Common myeloid progenitor, CD34-positive (primary cell): ENCODE measurements at regions of chr16 and their contacts with region 1.

Region 1: DNA sequence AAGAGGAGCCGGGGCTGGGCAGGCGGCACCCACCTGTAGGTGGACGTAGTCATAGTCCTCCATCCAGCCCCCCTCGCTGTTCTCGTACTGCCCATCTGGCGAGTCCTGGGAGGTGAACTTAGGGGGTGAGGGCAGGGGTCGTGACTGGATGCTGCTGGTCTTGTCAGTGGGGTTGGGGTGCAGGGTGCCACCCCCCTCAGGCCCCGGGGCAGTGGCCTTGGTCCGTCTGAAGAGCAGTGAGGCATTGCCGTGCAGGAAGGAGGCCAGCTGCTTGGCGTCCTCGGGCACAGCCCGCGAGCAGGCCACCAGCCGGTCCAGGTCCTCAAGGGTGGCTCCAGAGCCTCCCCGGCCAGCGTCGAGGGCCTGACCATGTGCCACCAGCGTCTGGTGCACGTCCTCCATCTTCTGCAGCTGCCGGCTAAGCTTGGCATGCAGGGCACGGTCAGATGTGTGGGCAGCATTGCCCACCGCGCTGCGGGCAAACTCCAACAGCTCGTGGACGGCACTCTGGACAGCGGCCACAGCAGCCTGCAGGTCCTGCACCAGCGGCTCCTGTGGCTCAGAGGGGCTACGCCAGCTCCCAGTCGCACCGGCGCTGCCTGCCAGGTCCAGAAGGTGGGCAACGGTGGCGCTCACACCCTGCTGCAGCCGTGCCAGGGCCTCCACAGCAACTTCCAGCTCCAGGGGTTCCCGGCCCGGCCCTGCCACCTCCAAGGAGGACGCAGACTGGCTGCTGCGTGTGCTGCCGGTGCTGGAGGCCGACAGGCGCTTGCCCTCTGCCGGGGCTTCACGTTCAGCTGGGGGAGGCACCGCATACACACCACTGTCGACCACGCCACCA is 16.3 kb downstream of the CTRB1 start:
- DNase-seq: no peak
- H3K4me3 ChIP-seq: no peak overlapping the region
- H3K27ac ChIP-seq: no peak overlapping the region
- H3K4me1 ChIP-seq: no peaks in the 10 kb centered on the region
- H3K27me3 ChIP-seq: peaks cover 0 to 88% (median 19%) of the 10 kb centered on the region in 5 experiments

Region 2: DNA sequence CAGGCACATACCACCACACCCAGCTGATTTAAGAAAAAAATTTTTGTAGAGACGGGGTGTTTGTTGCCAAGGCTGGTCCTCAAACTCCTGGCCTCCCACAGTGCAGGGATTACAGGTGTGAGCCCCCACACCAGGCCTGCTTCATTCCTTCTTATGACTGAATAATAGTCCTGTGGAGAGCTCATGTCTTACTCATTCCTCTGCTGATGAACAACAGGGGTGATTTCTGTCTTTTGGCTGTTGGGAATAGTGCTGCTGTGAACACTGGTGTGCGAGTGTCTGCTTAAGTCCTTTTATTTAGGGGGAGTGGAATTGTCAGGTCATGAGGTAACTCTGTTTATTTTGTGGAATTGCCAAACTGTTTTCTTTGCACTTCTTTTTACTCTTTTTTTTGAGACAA is 18.9 kb before region 1 on chr16:
- CTCF ChIA-PET with region 1: no interaction called
- POLR2A ChIA-PET with region 1: no interaction called
- DNase-seq: no peak
- H3K4me3 ChIP-seq: no peak overlapping the region
- H3K27ac ChIP-seq: no peak overlapping the region
- H3K4me1 ChIP-seq: peaks cover 0 to 2% (median 0%) of the 10 kb centered on the region in 4 experiments
- H3K27me3 ChIP-seq: peaks cover 0 to 27% (median 12%) of the 10 kb centered on the region in 5 experiments

Region 3: DNA sequence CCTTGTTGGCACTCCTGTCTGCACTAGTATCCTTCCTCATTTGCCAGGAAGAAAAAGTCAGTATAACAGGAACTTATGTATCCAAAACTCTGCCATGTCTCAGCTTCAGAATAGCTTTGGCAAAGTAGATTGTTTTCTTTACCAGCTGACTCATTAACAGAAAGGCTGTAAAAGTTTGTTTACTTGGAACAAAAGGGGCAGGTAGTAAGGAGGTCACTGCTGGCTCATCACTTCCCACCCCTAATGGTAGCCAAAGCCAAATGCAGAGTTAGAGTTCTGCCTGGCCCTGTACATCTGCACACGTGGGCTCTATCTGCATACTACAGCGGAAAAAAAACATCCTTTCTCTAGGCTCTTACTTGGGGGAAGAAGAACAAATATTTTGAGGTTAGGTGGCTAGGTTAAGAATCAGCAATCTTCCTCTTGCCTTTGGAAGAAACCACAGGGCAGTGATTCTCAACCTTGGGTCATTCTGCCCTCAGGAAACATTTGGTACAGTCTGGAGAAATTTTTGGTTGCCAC is 107.3 kb after region 1 on chr16:
- CTCF ChIA-PET with region 1: no interaction called
- POLR2A ChIA-PET with region 1: no interaction called
- DNase-seq: peak in 1 of 3 donors; percentile 10
- H3K4me3 ChIP-seq: no peak overlapping the region
- H3K27ac ChIP-seq: no peak overlapping the region
- H3K4me1 ChIP-seq: peaks cover 0 to 6% (median 0%) of the 10 kb centered on the region in 4 experiments
- H3K27me3 ChIP-seq: peaks cover 0 to 93% (median 45%) of the 10 kb centered on the region in 5 experiments

Region 4: DNA sequence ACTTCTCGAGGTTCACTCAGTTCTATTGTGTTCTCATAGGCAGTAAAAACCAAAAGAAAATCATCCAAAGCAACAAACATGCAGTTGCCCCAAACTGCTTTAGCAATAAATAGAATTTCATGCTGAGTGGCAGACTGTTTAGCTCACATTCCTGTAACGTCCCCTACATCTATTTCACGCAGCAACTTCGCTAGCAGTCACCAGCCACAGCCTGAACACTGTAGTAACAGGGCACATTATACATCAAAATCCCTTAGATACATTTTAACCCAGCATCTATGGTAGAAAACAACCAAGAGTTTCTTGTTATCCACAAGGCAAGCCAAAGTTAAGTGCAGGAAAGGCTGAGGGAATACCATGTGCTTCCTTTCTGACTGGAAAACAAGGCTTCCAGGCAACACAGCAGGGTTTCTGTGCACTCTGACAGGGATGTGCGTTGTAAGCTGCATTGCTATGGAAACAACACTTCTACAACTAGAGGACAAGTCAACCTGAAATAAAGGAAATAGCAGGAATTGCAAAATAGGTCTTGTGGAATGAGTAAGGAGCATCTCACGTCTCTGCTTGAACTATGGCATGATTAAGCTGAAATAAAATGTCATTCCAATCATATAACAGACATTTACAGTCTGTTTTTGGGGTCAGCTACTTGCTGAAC is 142.8 kb after region 1 on chr16:
- CTCF ChIA-PET with region 1: interaction called, 13 read pairs
- POLR2A ChIA-PET with region 1: no interaction called
- DNase-seq: no peak
- H3K4me3 ChIP-seq: no peak overlapping the region
- H3K27ac ChIP-seq: no peak overlapping the region
- H3K4me1 ChIP-seq: peaks cover 9 to 14% (median 10%) of the 10 kb centered on the region in 4 experiments
- H3K27me3 ChIP-seq: peaks cover 9 to 87% (median 57%) of the 10 kb centered on the region in 5 experiments

Region 5: GRCh38 chr16:75385507-75386152 is 150.6 kb after region 1 on chr16:
- CTCF ChIA-PET with region 1: interaction called, 33 read pairs
- POLR2A ChIA-PET with region 1: no interaction called
- DNase-seq: peak; percentile 88 to 96 (median 93)
- H3K4me3 ChIP-seq: no peak overlapping the region
- H3K27ac ChIP-seq: no peak overlapping the region
- H3K4me1 ChIP-seq: peaks cover 0 to 4% (median 2%) of the 10 kb centered on the region in 4 experiments
- H3K27me3 ChIP-seq: peaks cover 0 to 50% (median 21%) of the 10 kb centered on the region in 5 experiments

Region 6: GRCh38 chr16:75392911-75393310 is 157.8 kb after region 1 on chr16:
- CTCF ChIA-PET with region 1: interaction called, 33 read pairs
- POLR2A ChIA-PET with region 1: interaction called, 5 read pairs
- DNase-seq: no peak
- H3K4me3 ChIP-seq: no peak overlapping the region
- H3K27ac ChIP-seq: no peak overlapping the region
- H3K4me1 ChIP-seq: no peaks in the 10 kb centered on the region
- H3K27me3 ChIP-seq: peaks cover 0 to 18% (median 4%) of the 10 kb centered on the region in 5 experiments

Region 7: GRCh38 chr16:75402821-75403475 is 167.9 kb after region 1 on chr16:
- CTCF ChIA-PET with region 1: interaction called, 30 read pairs
- POLR2A ChIA-PET with region 1: no interaction called
- DNase-seq: peak; percentile 44 to 65 (median 58)
- H3K4me3 ChIP-seq: no peak overlapping the region
- H3K27ac ChIP-seq: no peak overlapping the region
- H3K4me1 ChIP-seq: peaks cover 0 to 10% (median 4%) of the 10 kb centered on the region in 4 experiments
- H3K27me3 ChIP-seq: no peaks in the 10 kb centered on the region